MCF 10A (cell line): ENCODE measurements at regions of chr10 and their contacts with region 1.

Region 1: DNA sequence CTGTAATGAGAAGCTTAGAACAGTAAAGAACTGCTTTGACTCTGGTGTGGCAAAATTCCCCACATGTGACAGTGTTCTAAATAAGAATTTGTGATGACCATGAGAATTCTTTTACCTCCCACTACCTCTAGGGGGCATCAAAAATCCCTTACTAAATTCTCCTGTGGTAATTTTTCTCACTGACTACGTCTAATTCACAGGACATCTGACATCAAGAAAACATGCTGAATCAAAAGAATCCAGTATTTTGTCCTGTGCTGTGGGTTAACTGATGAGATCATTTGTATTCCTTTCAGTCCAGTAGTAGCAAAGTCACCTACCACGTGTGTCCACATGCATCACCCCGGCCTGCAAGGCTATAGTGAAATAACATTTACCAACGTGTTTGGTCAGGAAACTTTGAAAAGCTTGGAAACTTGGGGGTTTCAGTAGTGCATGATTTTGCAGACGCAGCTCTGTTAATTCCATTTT is 103.8 kb downstream of the ATE1 start:
- DNase-seq: peak; percentile 50
- H3K4me3 Mint-ChIP-seq: no peak overlapping the region
- H3K27ac Mint-ChIP-seq: no peak overlapping the region
- H3K4me1 Mint-ChIP-seq: no peaks in the 10 kb centered on the region
- H3K27me3 Mint-ChIP-seq: no peaks in the 10 kb centered on the region
- CTCF ChIP-seq: peak; percentile 64

Region 2: DNA sequence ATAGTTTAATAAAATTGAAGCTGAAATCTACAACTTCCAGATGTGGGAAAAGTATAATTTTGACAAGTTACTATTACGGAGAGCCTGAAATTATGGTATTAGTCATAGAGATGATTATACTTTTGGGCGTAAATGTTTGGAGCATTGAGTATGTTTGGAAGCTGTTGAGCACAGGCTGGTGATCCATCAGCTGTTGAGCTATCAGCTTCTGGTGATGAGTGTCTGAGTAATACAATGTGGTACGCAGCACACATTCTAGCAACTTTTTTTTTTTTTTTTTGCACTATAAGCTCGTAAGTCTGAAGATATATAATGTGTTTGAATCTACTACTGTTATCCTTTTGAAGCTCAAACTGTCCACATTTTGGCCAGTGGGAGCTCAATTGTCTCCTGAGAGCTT is 19.6 kb before region 1 on chr10:
- CTCF ChIA-PET with region 1: interaction called, 11 read pairs
- POLR2A ChIA-PET with region 1: no interaction called
- intact Hi-C with region 1: no loop called
- DNase-seq: no peak
- H3K4me3 Mint-ChIP-seq: no peak overlapping the region
- H3K27ac Mint-ChIP-seq: no peak overlapping the region
- H3K4me1 Mint-ChIP-seq: no peaks in the 10 kb centered on the region
- H3K27me3 Mint-ChIP-seq: no peaks in the 10 kb centered on the region
- CTCF ChIP-seq: no peak

Region 3: DNA sequence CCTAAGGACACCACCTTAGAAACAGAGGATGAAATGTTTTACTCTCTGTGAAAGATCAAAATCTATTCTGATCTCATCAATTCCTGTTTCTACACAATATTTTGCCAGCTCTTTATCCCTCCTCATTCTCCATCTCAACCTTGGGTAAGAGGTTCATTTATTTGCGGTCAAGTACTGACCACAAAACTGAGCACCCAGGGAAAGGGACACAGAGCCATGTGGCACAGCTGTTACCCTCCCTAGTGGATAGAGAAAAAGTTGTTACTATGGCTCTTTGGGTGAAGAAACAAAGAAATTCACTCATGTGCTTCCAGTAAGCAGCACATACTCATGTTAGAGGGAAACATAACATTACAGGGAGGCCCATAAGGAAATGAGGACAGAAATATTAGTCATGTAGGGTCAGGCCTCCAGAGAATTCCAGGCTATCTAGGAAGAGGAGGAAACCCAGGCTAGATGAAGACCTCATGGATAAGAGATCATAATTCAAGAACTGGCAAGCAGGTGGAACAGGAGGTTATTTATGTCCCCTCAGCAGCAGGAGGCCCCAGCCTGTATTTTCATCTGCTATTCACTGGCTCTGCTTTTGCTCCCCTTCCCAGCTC is 10.7 kb before region 1 on chr10:
- CTCF ChIA-PET with region 1: interaction called, 18 read pairs
- POLR2A ChIA-PET with region 1: interaction called, 3 read pairs
- intact Hi-C with region 1: no loop called
- DNase-seq: no peak
- H3K4me3 Mint-ChIP-seq: no peak overlapping the region
- H3K27ac Mint-ChIP-seq: no peak overlapping the region
- H3K4me1 Mint-ChIP-seq: no peaks in the 10 kb centered on the region
- H3K27me3 Mint-ChIP-seq: no peaks in the 10 kb centered on the region
- CTCF ChIP-seq: no peak

Region 4: GRCh38 chr10:121841862-121842261 is 17.8 kb after region 1 on chr10:
- CTCF ChIA-PET with region 1: interaction called, 13 read pairs
- POLR2A ChIA-PET with region 1: no interaction called
- intact Hi-C with region 1: no loop called
- DNase-seq: no peak
- H3K4me3 Mint-ChIP-seq: no peak overlapping the region
- H3K27ac Mint-ChIP-seq: no peak overlapping the region
- H3K4me1 Mint-ChIP-seq: no peaks in the 10 kb centered on the region
- H3K27me3 Mint-ChIP-seq: no peaks in the 10 kb centered on the region
- CTCF ChIP-seq: no peak

Region 5: DNA sequence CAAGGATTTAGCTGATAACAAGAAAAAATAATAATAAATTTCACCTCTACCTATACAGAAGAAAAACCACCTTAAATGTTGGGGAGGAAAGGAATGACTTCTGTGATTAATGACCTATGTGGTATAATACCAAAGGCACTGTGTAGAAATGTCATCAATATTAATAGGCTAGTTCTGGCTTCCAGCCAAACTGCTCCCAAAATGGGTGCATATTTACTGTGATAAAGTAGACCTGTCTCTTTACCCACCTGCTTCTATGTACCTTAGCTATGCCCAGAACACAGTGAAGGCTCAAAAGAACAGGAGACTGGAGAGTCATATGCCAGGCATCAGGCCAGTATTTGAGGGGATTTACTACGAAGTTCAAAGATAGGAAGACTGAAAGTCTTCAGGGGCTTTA is 27.8 kb after region 1 on chr10:
- CTCF ChIA-PET with region 1: interaction called, 12 read pairs
- POLR2A ChIA-PET with region 1: no interaction called
- intact Hi-C with region 1: no loop called
- DNase-seq: no peak
- H3K4me3 Mint-ChIP-seq: no peak overlapping the region
- H3K27ac Mint-ChIP-seq: no peak overlapping the region
- H3K4me1 Mint-ChIP-seq: no peaks in the 10 kb centered on the region
- H3K27me3 Mint-ChIP-seq: no peaks in the 10 kb centered on the region
- CTCF ChIP-seq: no peak

Region 6: DNA sequence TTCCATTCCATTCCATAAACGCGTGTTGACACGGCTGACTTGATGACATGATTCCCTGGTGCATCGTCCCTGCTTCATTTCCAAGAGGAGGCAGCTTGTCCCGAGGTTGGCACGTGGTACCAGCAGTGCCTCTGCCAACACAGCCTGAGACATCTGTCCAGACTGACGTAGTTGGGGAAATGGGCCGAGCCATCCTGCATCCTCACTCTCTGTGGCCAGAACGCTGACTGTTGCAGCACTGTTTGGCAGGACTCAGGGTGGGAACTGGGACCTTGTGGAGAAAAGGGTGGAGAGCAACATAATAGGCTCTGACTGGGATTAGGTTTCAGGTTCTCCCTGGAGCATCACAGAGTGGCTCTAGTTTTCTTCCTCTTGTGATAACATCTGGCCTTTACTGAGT is 328.5 kb after region 1 on chr10:
- CTCF ChIA-PET with region 1: no interaction called
- POLR2A ChIA-PET with region 1: no interaction called
- intact Hi-C with region 1: no loop called
- DNase-seq: no peak
- H3K4me3 Mint-ChIP-seq: no peak overlapping the region
- H3K27ac Mint-ChIP-seq: no peak overlapping the region
- H3K4me1 Mint-ChIP-seq: peaks cover 24% of the 10 kb centered on the region
- H3K27me3 Mint-ChIP-seq: no peaks in the 10 kb centered on the region
- CTCF ChIP-seq: no peak

Region 7: GRCh38 chr10:122657255-122657654 is 833.2 kb after region 1 on chr10:
- CTCF ChIA-PET with region 1: no interaction called
- POLR2A ChIA-PET with region 1: no interaction called
- intact Hi-C with region 1: no loop called
- DNase-seq: no peak
- H3K4me3 Mint-ChIP-seq: no peak overlapping the region
- H3K27ac Mint-ChIP-seq: no peak overlapping the region
- H3K4me1 Mint-ChIP-seq: no peaks in the 10 kb centered on the region
- H3K27me3 Mint-ChIP-seq: peaks cover 38% of the 10 kb centered on the region
- CTCF ChIP-seq: no peak